ENCODE measurements at regions of chr17 and their contacts with region 1.

Region 1: GRCh38 chr17:66255112-66255511 is 25.9 kb upstream of the APOH start:
- DNase-seq: peak in 2 of 5 donors; percentile 13 to 20
- H3K4me3 ChIP-seq: no peak overlapping the region
- H3K27ac ChIP-seq: no peak overlapping the region
- H3K4me1 ChIP-seq: no peaks in the 10 kb centered on the region
- H3K27me3 ChIP-seq: no peaks in the 10 kb centered on the region
- CTCF ChIP-seq: peak; percentile 62 to 87 (median 80)
- EP300 ChIP-seq: no peak
- POLR2A ChIP-seq: no peak

Region 2: GRCh38 chr17:66386498-66387365 is 131.6 kb after region 1 on chr17:
- intact Hi-C with region 1: no loop called
- DNase-seq: no peak
- H3K4me3 ChIP-seq: no peak overlapping the region
- H3K27ac ChIP-seq: no peak overlapping the region
- H3K4me1 ChIP-seq: peaks cover 9% of the 10 kb centered on the region
- H3K27me3 ChIP-seq: no peaks in the 10 kb centered on the region
- CTCF ChIP-seq: no peak
- EP300 ChIP-seq: no peak
- POLR2A ChIP-seq: no peak

Region 3: DNA sequence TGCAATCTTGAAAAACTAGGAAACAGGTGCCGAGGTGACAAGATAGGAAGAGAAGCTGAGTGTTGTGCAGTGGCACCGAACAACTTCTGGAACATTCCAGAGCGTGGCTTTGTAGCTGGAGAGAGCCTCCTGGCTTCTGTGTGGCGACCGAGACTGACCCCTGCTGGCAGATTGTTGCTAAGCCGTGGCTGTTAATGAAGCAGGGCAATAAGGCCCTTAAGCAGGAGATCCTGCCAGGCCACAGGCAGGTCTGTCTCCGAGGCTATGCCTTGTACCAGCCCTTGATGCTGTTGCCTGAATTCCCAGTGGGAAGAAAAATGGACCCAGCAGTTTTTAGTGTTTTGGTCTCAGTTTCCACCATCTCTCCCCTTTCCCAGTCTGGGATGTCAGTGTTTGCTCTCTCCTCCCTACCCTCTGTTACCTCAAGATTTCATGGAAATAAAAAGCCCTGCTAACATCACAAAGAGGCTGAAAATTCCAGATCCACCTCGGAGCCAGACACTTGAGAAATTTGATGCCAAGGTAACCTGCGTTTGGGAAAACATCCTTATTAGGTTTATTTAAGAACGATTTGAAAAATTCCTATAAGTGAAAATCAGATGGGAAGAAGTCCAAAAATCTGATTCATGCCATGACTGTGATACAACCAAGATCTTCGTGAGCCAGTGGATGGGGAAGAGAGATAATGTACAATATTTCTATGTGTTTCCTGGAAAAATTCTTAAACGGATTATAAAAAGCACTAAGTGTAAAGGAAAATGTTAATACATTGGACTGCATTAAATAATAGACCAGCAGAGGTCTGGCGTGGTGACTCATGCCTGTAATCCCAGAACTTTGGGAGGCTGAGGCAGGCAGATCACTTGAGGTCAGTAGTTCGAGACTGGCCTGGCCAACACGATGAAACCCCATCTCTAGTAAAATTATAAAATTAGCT is 312.4 kb after region 1 on chr17:
- intact Hi-C with region 1: loop called in 1 of 4 experiments (anchors 10 kb)
- DNase-seq: peak; percentile 58 to 84 (median 72)
- H3K4me3 ChIP-seq: no peak overlapping the region
- H3K27ac ChIP-seq: no peak overlapping the region
- H3K4me1 ChIP-seq: peaks cover 3% of the 10 kb centered on the region
- H3K27me3 ChIP-seq: no peaks in the 10 kb centered on the region
- CTCF ChIP-seq: peak; percentile 30 to 35 (median 34)
- EP300 ChIP-seq: no peak
- POLR2A ChIP-seq: no peak

Region 4: GRCh38 chr17:66673668-66674315 is 418.7 kb after region 1 on chr17:
- intact Hi-C with region 1: loop called (anchors 1 to 5 kb)
- DNase-seq: peak; percentile 44 to 54 (median 49)
- H3K4me3 ChIP-seq: no peak overlapping the region
- H3K27ac ChIP-seq: no peak overlapping the region
- H3K4me1 ChIP-seq: no peaks in the 10 kb centered on the region
- H3K27me3 ChIP-seq: no peaks in the 10 kb centered on the region
- CTCF ChIP-seq: peak; percentile 45 to 79 (median 69)
- EP300 ChIP-seq: no peak
- POLR2A ChIP-seq: no peak

Region 5: GRCh38 chr17:66906321-66907278 is 651.5 kb after region 1 on chr17:
- intact Hi-C with region 1: loop called in 1 of 4 experiments (anchors 10 kb)
- DNase-seq: peak; percentile 79 to 87 (median 81)
- H3K4me3 ChIP-seq: no peak overlapping the region
- H3K27ac ChIP-seq: no peak overlapping the region
- H3K4me1 ChIP-seq: peaks cover 7% of the 10 kb centered on the region
- H3K27me3 ChIP-seq: no peaks in the 10 kb centered on the region
- CTCF ChIP-seq: peak; percentile 52 to 75 (median 58)
- EP300 ChIP-seq: no peak
- POLR2A ChIP-seq: no peak